Ascending aorta (tissue), 2 donors: ENCODE measurements at regions of chr5 and their contacts with region 1.

Region 1: GRCh38 chr5:139765409-139766217 is 30.0 kb upstream of the PSD2 start:
- DNase-seq: peak in 1 of 2 donors; percentile 84
- H3K4me3 ChIP-seq: peak overlapping the region; percentile 47 to 67
- H3K27ac ChIP-seq: no peak overlapping the region
- H3K4me1 ChIP-seq: peaks cover 0 to 7% of the 10 kb centered on the region in 2 donors
- H3K27me3 ChIP-seq: peaks cover 8% of the 10 kb centered on the region
- CTCF ChIP-seq: peak; percentile 94 to 99 (median 99)

Region 2: GRCh38 chr5:139690064-139690802 is 75.4 kb before region 1 on chr5:
- intact Hi-C with region 1: loop called (anchors 2 kb)
- DNase-seq: no peak
- H3K4me3 ChIP-seq: no peak overlapping the region
- H3K27ac ChIP-seq: peak overlapping the region in 1 of 2 donors; percentile 21
- H3K4me1 ChIP-seq: peaks cover 0 to 37% of the 10 kb centered on the region in 2 donors
- H3K27me3 ChIP-seq: no peaks in the 10 kb centered on the region
- CTCF ChIP-seq: peak; percentile 55 to 73 (median 69)

Region 3: GRCh38 chr5:139711067-139711905 is 54.3 kb before region 1 on chr5:
- intact Hi-C with region 1: loop called (anchors 5 kb)
- DNase-seq: peak in 1 of 2 donors; percentile 84
- H3K4me3 ChIP-seq: peak overlapping the region; percentile 59 to 60
- H3K27ac ChIP-seq: peak overlapping the region; percentile 66 to 71
- H3K4me1 ChIP-seq: peaks cover 8 to 27% of the 10 kb centered on the region in 2 donors
- H3K27me3 ChIP-seq: no peaks in the 10 kb centered on the region
- CTCF ChIP-seq: peak in 1 of 3 experiments; percentile 12

Region 4: DNA sequence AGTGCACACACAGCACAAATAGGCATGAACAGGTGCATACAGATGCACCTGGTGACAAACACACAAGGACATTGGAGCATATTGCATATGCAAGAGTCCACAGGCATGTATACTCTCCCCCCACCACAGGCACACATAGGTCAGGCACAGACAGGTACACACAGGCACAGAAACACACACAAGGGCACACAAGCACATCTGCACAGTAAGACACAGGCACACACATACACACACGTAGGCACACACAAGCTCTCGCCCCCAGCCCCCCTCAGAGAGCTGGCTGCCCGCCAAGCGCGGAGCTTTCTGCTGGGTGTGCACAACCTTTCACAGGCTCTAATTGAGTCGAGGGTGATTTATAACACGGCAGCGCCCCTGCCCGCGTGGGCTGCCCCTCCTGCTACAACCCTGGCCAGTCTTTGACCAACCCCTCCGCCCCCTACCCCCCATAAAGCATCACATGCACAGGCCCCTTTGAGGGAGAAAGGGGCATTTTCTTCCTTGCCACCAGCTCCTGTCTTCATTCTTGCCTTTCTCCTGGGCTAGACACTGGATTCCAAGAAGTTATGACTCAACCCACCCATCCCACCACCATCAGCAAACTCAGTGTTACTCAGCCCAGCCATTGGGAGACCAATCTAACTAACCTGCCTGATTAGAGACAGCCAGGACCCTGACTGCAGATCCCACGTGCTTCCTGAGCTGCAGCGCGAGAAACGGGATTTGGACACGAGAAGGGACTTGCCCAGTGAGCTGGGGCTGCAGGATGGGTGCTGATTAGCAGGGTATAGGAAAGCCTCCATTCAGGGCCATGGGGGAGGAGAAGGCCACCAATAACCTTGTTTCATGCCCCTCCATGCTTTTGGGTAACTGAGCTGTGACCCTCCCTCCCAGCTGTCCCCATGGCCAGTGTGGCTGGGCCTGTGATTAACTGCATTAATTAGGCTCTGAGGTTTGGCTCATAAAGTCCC is 12.8 kb before region 1 on chr5:
- intact Hi-C with region 1: no loop called
- DNase-seq: no peak
- H3K4me3 ChIP-seq: no peak overlapping the region
- H3K27ac ChIP-seq: no peak overlapping the region
- H3K4me1 ChIP-seq: peaks cover 1 to 7% of the 10 kb centered on the region in 2 donors
- H3K27me3 ChIP-seq: peaks cover 5% of the 10 kb centered on the region
- CTCF ChIP-seq: no peak

Region 5: DNA sequence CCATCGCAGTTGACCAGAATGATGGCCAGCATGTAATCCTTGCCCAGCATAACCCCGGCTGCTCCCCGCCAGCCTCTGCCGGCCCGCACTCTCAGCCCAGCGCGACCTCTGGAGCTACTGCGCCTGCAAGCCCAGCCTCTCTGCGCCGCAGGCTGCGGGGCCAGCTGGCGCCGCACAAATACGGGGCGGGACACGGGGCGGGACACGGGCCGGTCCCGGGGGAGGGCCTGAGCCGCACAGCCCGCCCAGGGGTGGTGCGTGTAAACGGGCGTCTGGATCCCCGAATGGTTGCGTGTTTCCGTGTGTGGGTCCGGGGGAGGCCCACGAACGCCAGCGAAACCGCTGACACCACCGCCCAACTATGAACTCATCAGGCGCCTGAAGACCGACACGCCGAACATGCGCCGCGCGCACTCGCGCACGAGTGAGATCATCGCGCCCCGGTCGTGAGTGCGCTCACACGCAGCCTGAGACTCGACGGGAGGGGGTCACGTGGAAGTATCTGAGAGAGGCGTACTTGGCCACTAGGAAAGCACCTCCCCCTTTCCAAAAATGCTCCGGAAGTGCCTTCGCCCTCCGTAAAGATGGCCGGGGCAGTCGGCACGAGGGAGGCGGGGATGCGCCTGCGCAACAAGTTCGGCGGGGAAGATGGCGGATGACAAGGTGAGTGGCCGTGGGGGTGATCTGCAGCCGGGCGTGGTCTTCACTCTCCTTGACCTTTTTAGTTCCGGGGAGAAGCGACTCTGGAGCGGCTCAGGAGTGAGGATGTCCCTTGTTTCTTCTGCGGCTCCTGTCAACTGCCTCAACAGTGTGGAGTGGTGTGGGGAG is 798.8 kb after region 1 on chr5 and contains the starts of genes APBB3 and SLC35A4:
- intact Hi-C with region 1: no loop called
- DNase-seq: peak; percentile 96 to 99
- H3K4me3 ChIP-seq: peak within 1 kb of the TSS; percentile 88 to 92
- H3K27ac ChIP-seq: peak within 1 kb of the TSS; percentile 92 to 93
- H3K4me1 ChIP-seq: peaks cover 16 to 24% of the 10 kb centered on the region in 2 donors
- H3K27me3 ChIP-seq: no peaks in the 10 kb centered on the region
- CTCF ChIP-seq: no peak
- total RNA-seq, gene APBB3: 47.3 TPM
- total RNA-seq, gene SLC35A4: 46.2 TPM